MCF 10A (cell line): ENCODE measurements at regions of chrX and their contacts with region 1.

Region 1: GRCh38 chrX:41084044-41084892 is 977 bp upstream of the USP9X start:
- DNase-seq: peak; percentile 98
- H3K4me3 Mint-ChIP-seq: peak overlapping the region; percentile 95
- H3K27ac Mint-ChIP-seq: peak overlapping the region; percentile 99
- H3K4me1 Mint-ChIP-seq: peaks cover 6% of the 10 kb centered on the region
- H3K27me3 Mint-ChIP-seq: peaks cover 17% of the 10 kb centered on the region
- CTCF ChIP-seq: no peak

Region 2: GRCh38 chrX:39911278-39911897 is 1172.9 kb before region 1 on chrX:
- CTCF ChIA-PET with region 1: no interaction called
- POLR2A ChIA-PET with region 1: no interaction called
- intact Hi-C with region 1: no loop called
- DNase-seq: no peak
- H3K4me3 Mint-ChIP-seq: no peak overlapping the region
- H3K27ac Mint-ChIP-seq: no peak overlapping the region
- H3K4me1 Mint-ChIP-seq: peaks cover 16% of the 10 kb centered on the region
- H3K27me3 Mint-ChIP-seq: peaks cover 45% of the 10 kb centered on the region
- CTCF ChIP-seq: no peak

Region 3: GRCh38 chrX:40735325-40736169 is 348.7 kb before region 1 on chrX and contains the start of gene MED14:
- CTCF ChIA-PET with region 1: interaction called, 3 read pairs
- POLR2A ChIA-PET with region 1: interaction called, 20 read pairs
- intact Hi-C with region 1: no loop called
- DNase-seq: peak; percentile 90
- H3K4me3 Mint-ChIP-seq: peak within 1 kb of the TSS; percentile 94
- H3K27ac Mint-ChIP-seq: peak within 1 kb of the TSS; percentile 96
- H3K4me1 Mint-ChIP-seq: peaks cover 24% of the 10 kb centered on the region
- H3K27me3 Mint-ChIP-seq: peaks cover 51% of the 10 kb centered on the region
- CTCF ChIP-seq: peak; percentile 68
- total RNA-seq, gene MED14: 35.6 and 36.4 TPM in 2 replicates

Region 4: GRCh38 chrX:40877887-40878286 is 206.4 kb before region 1 on chrX:
- CTCF ChIA-PET with region 1: interaction called, 3 read pairs
- POLR2A ChIA-PET with region 1: interaction called, 10 read pairs
- intact Hi-C with region 1: no loop called
- DNase-seq: peak; percentile 42
- H3K4me3 Mint-ChIP-seq: no peak overlapping the region
- H3K27ac Mint-ChIP-seq: no peak overlapping the region
- H3K4me1 Mint-ChIP-seq: no peaks in the 10 kb centered on the region
- H3K27me3 Mint-ChIP-seq: peaks cover 72% of the 10 kb centered on the region
- CTCF ChIP-seq: peak; percentile 52

Region 5: DNA sequence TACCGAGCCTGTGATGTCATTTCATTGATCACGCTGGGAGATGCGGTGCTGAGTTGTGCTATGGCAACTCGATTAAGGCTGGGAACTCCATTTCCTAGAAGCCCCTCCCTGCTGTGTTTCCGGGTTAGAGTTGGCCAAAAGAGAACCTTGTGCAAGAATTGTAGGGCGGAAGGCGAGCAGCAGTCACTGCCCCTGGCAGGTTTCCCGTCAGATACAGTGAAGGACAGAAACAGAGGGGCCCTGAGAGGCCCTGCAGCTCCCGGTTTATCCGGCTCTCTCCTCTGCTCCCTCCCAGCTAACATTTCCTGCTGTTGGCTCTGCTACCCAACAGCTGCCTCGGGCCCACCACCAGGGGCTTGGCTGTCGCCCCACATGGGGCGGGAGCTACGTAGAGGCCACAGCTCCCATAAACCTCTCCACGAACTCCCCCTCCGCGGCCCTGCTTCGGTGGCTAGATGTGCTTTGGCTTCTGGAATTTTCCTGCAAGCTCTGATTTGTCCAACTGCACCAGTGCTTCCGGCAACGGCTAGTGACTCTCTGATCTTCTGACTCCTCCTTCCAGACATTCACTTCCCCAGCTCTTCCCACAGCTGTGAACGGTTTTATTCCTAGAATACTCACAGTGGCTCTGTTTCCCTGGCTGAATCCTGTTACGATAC is 74.0 kb before region 1 on chrX:
- CTCF ChIA-PET with region 1: no interaction called
- POLR2A ChIA-PET with region 1: interaction called, 37 read pairs
- intact Hi-C with region 1: loop called (anchors 1 kb)
- DNase-seq: peak; percentile 96
- H3K4me3 Mint-ChIP-seq: peak overlapping the region; percentile 67
- H3K27ac Mint-ChIP-seq: peak overlapping the region; percentile 74
- H3K4me1 Mint-ChIP-seq: peaks cover 26% of the 10 kb centered on the region
- H3K27me3 Mint-ChIP-seq: peaks cover 64% of the 10 kb centered on the region
- CTCF ChIP-seq: no peak

Region 6: GRCh38 chrX:41027431-41027831 is 56.8 kb before region 1 on chrX:
- CTCF ChIA-PET with region 1: no interaction called
- POLR2A ChIA-PET with region 1: interaction called, 28 read pairs
- intact Hi-C with region 1: no loop called
- DNase-seq: peak; percentile 59
- H3K4me3 Mint-ChIP-seq: no peak overlapping the region
- H3K27ac Mint-ChIP-seq: peak overlapping the region; percentile 39
- H3K4me1 Mint-ChIP-seq: peaks cover 9% of the 10 kb centered on the region
- H3K27me3 Mint-ChIP-seq: peaks cover 42% of the 10 kb centered on the region
- CTCF ChIP-seq: no peak

Region 7: DNA sequence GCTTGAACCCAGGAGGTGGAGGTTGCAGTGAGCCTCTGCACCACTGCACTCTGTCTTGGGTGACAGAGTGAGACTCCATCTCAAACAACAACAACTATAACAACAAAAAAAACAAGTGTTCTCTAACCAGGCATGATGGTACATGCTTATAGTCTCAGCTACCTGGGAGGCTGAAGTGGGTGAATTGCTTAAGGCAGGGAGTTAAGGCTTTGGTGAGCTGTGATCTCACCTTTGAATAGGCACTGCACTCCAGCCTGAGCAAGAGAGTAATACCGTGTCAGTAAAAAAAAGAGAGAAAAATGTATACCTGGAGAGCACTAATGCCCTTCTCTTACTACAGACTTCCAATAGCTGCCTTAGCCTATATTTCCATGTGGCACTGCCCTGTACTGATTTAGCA is 17.9 kb before region 1 on chrX:
- CTCF ChIA-PET with region 1: no interaction called
- POLR2A ChIA-PET with region 1: interaction called, 10 read pairs
- intact Hi-C with region 1: no loop called
- DNase-seq: no peak
- H3K4me3 Mint-ChIP-seq: no peak overlapping the region
- H3K27ac Mint-ChIP-seq: no peak overlapping the region
- H3K4me1 Mint-ChIP-seq: no peaks in the 10 kb centered on the region
- H3K27me3 Mint-ChIP-seq: peaks cover 71% of the 10 kb centered on the region
- CTCF ChIP-seq: no peak

Region 8: GRCh38 chrX:41096339-41096955 is 12.2 kb after region 1 on chrX:
- CTCF ChIA-PET with region 1: interaction called, 6 read pairs
- POLR2A ChIA-PET with region 1: interaction called, 29 read pairs
- intact Hi-C with region 1: no loop called
- DNase-seq: no peak
- H3K4me3 Mint-ChIP-seq: no peak overlapping the region
- H3K27ac Mint-ChIP-seq: no peak overlapping the region
- H3K4me1 Mint-ChIP-seq: peaks cover 9% of the 10 kb centered on the region
- H3K27me3 Mint-ChIP-seq: peaks cover 30% of the 10 kb centered on the region
- CTCF ChIP-seq: no peak

Region 9: DNA sequence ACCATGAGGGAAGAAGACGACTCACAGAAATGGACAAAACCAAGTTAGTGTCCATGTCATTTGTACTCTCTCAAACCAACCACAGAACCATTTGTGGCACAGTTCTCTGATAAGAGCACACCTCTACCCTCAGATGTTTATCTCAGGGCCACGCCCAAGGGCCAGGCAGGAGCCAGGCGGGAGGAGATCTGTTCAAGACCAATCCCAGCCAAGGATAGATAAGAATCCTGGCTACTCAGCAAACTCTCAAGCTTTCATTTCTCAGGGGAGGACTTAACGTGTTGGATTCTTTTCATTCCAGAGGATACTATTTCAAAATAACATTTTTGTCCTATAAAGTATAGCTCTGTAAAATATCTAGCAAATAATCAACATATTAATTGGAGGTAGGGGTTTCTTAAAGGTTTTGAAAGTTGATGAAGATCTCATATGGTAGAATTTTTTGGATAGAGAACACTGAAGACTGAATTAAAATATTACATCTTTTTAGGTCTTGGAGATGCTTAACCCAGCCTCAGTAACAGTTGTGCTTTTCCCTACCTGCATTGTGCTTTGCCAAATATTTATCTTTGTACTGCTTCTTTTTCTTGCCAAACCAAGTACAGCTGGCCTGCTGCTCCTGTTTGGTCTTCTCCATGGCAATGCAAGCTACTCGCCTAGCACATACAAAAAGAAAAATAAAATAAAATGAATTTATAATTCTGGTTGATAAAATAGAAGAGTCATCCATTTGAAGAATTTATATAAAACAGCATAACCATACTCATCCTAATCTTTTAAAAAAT is 458.1 kb after region 1 on chrX:
- CTCF ChIA-PET with region 1: no interaction called
- POLR2A ChIA-PET with region 1: no interaction called
- intact Hi-C with region 1: no loop called
- DNase-seq: no peak
- H3K4me3 Mint-ChIP-seq: no peak overlapping the region
- H3K27ac Mint-ChIP-seq: no peak overlapping the region
- H3K4me1 Mint-ChIP-seq: no peaks in the 10 kb centered on the region
- H3K27me3 Mint-ChIP-seq: peaks cover 9% of the 10 kb centered on the region
- CTCF ChIP-seq: no peak